HEK293 (cell line): ENCODE measurements at regions of chr1 and their contacts with region 1.

Region 1: DNA sequence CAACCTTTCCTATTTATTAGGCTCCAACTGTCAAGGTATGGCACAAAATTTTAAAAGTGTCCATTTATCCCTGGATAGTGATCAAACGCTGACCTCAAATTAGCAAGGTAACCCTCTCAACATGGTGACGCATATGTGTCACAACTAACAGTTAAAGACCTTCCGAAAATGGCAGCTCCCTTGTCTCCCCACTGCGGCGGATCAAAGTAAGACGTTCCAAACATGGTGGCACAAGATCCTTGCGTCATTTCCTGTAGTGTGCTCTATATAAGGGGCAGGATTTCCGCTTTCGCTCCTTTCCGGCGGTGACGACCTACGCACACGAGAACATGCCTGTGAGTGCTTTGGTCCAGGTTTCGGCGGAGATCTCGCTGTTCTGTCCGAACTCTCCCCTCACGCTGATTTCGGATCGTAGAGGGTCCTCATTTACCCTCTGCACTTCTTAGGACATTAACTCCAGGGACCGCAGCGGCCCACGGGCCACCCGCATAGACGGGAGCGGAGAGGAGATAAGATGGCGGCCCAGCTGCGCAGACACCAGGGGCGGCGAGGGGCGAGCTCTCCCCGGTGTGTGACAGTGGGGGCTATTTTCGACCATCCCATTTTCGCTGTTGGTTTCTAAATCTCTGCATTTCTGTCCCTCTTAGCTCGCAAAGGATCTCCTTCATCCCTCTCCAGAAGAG is at the start of gene RPS27:
- H3K4me3 ChIP-seq: peak within 1 kb of the TSS; percentile 93
- H3K27ac ChIP-seq: peak within 1 kb of the TSS; percentile 67
- H3K4me1 ChIP-seq: peaks cover 3% of the 10 kb centered on the region; the same call in 1 of the 2 replicates
- CTCF ChIP-seq: no peak

Region 2: DNA sequence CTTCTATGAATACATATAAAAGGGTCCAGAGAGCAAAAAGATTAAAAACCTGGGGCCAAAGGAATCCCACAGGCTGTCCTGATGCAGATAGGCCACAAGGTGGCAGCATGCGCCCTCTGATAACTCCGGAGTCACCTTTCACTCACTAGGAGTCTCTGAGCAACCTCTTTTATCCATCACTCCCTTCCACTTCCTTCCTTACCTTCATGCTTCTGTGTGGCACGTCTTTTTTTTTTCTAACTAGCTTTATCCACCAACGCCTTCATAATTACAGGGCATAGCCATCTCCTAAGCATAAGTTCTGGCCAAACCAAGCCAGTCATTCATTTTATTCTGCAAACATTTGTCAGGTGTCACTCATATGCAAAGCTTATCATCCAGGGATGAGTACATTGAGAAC is 638.1 kb before region 1 on chr1:
- CTCF ChIA-PET with region 1: interaction called, 10 read pairs
- POLR2A ChIA-PET with region 1: interaction called, 3 read pairs
- H3K4me3 ChIP-seq: no peak overlapping the region
- H3K27ac ChIP-seq: no peak overlapping the region
- H3K4me1 ChIP-seq: no peaks in the 10 kb centered on the region
- CTCF ChIP-seq: peak; percentile 52; the same call in 1 of the 2 replicates

Region 3: GRCh38 chr1:153670859-153671627 is 319.6 kb before region 1 on chr1 and contains the start of gene ILF2:
- CTCF ChIA-PET with region 1: interaction called, 14 read pairs
- POLR2A ChIA-PET with region 1: interaction called, 9 read pairs
- H3K4me3 ChIP-seq: peak within 1 kb of the TSS; percentile 85
- H3K27ac ChIP-seq: peak within 1 kb of the TSS; percentile 77
- H3K4me1 ChIP-seq: no peaks in the 10 kb centered on the region
- CTCF ChIP-seq: peak; percentile 90

Region 4: DNA sequence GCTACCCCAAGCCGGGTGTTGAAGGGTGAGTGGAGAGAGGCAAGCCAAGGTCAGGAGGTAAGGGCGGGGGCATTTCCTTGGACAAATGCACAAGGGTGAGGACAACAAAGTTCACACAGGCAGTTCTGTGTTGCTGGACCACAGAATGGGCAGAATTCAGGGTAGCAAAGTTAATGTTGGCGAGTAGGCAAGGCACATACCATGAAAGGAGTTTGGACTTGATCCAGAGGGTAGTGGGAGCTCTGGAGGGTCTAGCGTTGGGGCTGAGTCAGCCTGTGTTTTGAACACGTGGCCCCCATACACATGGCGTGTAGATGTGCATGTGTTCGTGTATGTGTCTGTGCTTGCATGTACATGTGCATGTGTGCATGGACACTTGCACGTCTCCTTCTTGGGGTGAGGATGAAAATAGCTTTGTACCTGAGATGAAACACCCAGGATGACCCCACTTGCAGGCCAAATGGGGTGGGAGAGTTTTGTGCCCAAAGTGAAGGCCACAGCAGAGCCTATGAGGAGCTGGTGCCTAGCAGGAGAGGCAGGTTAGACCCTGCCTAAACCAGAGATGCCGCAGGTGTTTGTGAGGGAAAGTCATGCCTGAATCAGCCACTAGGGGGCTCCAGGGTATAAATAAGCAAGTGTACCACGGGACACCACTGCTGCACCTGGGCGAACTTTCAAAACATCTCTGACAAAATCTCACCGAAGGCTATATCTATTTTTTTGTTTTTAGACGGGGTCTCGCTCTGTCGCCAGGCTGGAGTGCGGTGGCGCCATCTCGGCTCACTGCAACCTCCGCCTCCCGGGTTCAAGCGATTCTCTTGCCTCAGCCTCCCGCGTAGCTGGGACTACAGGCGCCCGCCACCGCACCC is 193.6 kb before region 1 on chr1:
- CTCF ChIA-PET with region 1: interaction called, 46 read pairs
- POLR2A ChIA-PET with region 1: interaction called, 8 read pairs
- H3K4me3 ChIP-seq: no peak overlapping the region
- H3K27ac ChIP-seq: no peak overlapping the region
- H3K4me1 ChIP-seq: no peaks in the 10 kb centered on the region
- CTCF ChIP-seq: peak; percentile 78

Region 5: GRCh38 chr1:153845158-153845557 is 145.5 kb before region 1 on chr1:
- CTCF ChIA-PET with region 1: interaction called, 4 read pairs
- POLR2A ChIA-PET with region 1: interaction called, 11 read pairs
- H3K4me3 ChIP-seq: no peak overlapping the region
- H3K27ac ChIP-seq: no peak overlapping the region
- H3K4me1 ChIP-seq: no peaks in the 10 kb centered on the region
- CTCF ChIP-seq: no peak

Region 6: GRCh38 chr1:153967082-153968000 is 23.3 kb before region 1 on chr1 and contains the start of gene CREB3L4:
- CTCF ChIA-PET with region 1: interaction called, 18 read pairs
- POLR2A ChIA-PET with region 1: interaction called, 50 read pairs
- H3K4me3 ChIP-seq: peak within 1 kb of the TSS; percentile 51
- H3K27ac ChIP-seq: peak within 1 kb of the TSS; percentile 87
- H3K4me1 ChIP-seq: peaks cover 3% of the 10 kb centered on the region; the same call in 1 of the 2 replicates
- CTCF ChIP-seq: peak; percentile 97

Region 7: GRCh38 chr1:154404984-154405761 is 414.6 kb after region 1 on chr1 and contains the start of gene IL6R:
- CTCF ChIA-PET with region 1: no interaction called
- POLR2A ChIA-PET with region 1: no interaction called
- H3K4me3 ChIP-seq: peak within 1 kb of the TSS; percentile 53
- H3K27ac ChIP-seq: peak within 1 kb of the TSS; percentile 48; the same call in 1 of the 2 replicates
- H3K4me1 ChIP-seq: peaks cover 2% of the 10 kb centered on the region; the same call in 1 of the 2 replicates
- CTCF ChIP-seq: peak; percentile 98